GM18951 (cell line): ENCODE measurements at regions of chr6 and their contacts with region 1.

Region 1: DNA sequence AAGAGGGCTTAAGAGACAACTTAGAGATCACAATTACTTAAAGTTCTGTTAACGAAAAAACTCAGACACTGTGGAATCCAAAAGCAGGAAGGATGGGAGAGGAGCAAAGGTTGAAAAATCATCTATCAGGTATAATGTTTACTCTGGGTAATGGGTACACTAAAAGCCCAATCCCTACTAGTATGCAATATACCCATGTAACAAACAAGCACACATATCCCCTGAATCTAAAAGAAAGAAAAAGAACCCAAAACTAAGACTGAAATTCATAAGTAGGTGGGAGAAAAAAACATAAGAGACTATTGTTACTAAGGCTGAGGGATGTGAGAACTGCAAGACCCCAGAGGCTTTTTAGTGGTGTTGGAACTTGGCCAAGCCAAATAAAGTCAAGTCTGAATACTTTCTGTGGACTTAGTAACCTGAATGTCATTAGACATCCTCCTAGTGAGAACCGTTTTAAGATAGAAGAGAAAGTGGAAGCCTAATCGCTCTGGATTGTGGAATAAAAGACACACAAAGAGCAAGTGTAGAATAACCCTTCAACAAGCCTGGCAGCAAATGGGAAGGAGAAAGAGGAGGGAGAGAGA is 189.4 kb upstream of the RNF217 start:
- POLR2A ChIP-seq: no peak

Region 2: GRCh38 chr6:123802697-123803496 is 969.9 kb before region 1 on chr6:
- in situ Hi-C with region 1: loop called (anchors 25 kb)
- POLR2A ChIP-seq: no peak

Region 3: GRCh38 chr6:125153391-125154117 is 380.7 kb after region 1 on chr6 and contains the start of gene TPD52L1:
- in situ Hi-C with region 1: no loop called
- POLR2A ChIP-seq: no peak